ENCODE measurements at regions of chrX and their contacts with region 1.

Region 1: GRCh38 chrX:131741103-131741581 is 197.3 kb downstream of the OR13H1 start:
- H3K4me3 ChIP-seq: peak overlapping the region; percentile 12
- H3K27ac ChIP-seq: peak overlapping the region; percentile 74
- H3K4me1 ChIP-seq: peaks cover 3% of the 10 kb centered on the region; the same call in 1 of the 2 replicates
- CTCF ChIP-seq: peak; percentile 57; the same call in 1 of the 2 replicates

Region 2: DNA sequence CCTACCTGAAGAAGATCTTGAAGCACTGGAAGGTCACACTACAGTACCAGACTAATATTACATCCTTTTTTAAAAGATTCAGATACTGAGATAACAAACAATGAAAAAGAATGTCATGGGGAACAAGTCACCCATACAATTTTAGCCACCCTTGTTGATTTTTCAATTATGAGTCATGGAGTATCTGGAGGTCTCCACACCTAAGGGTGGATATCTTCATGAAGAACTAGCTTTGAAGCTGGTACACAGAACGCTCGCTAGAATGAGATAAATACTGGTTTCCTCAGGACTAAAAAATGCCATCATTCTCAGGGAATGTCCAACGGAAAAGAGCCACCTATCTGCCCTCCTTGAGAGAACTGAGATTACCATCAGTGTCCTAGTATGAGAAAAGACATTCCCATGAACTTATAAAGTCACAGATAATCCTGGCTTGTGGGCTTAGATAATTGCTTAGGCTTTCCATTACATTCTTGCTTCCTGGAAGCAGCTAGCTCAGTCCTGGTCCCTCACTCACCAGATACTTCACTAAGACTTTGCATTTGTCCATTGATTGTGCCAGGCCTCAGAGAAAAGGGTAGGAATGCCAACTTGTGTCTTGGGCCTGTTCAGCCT is 30.6 kb before region 1 on chrX:
- CTCF ChIA-PET with region 1: interaction called, 10 read pairs
- POLR2A ChIA-PET with region 1: no interaction called
- H3K4me3 ChIP-seq: no peak overlapping the region
- H3K27ac ChIP-seq: no peak overlapping the region
- H3K4me1 ChIP-seq: no peaks in the 10 kb centered on the region
- CTCF ChIP-seq: no peak

Region 3: DNA sequence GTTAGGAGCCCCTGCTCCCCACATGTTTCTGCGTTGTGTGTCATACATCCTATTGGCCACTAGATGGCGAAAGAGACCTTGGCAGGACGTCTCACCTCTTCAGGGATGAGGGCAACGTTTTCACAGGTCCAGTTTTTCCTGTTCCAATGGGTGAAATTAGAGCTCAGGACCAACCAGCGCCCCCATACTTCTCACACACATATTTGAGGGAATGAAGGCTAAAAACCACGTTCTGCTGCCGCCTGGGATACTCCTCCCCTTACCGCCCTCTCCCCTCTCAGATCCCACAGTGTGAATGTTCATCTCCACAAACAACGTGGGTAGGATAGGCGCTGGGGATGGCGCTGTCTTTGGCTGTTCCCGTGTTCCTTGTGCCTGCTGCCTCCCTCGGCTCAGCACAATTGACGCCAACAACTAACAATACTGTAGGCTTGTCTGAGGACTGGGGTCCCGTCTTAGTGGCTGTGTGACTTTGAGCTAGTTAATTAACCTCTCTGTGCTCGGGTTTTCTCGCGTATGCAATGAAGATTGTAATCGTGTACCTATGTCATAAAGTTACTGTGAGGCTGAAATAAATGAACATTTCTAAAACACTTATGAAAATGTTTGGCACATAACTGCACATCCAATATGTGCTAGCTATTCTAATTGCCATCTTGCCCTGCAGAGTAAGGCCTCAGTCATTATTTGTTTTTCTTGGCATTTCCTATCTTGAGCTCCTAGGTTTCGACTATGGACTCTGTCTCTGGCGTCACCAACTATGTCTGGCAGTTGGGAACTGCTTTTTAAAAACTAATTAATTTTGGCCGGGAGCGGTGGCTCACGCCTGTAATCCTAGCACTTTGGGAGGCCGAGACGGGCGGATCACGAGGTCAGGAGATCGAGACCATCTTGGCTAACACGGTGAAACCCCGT is 100.6 kb after region 1 on chrX:
- CTCF ChIA-PET with region 1: no interaction called
- POLR2A ChIA-PET with region 1: no interaction called
- H3K4me3 ChIP-seq: no peak overlapping the region
- H3K27ac ChIP-seq: no peak overlapping the region
- H3K4me1 ChIP-seq: peaks cover 7% of the 10 kb centered on the region; the same call in 1 of the 2 replicates
- CTCF ChIP-seq: peak; percentile 89

Measured in HEK293 (cell line).